IMR-90 (cell line): ENCODE measurements at regions of chr4 and their contacts with region 1.

Region 1: GRCh38 chr4:8176547-8177399 is 18.2 kb upstream of the ABLIM2 start:
- DNase-seq: peak; percentile 52
- ATAC-seq: peak; percentile 99
- H3K4me3 ChIP-seq: no peak overlapping the region
- H3K27ac ChIP-seq: no peak overlapping the region
- H3K4me1 ChIP-seq: no peaks in the 10 kb centered on the region
- H3K27me3 ChIP-seq: peaks cover 38% of the 10 kb centered on the region
- CTCF ChIP-seq: peak; percentile 93
- POLR2A ChIP-seq: no peak
- RAD21 ChIP-seq: peak; percentile 94

Region 2: GRCh38 chr4:8192748-8193738 is 16.3 kb after region 1 on chr4:
- CTCF ChIA-PET with region 1: interaction called, 11 read pairs
- POLR2A ChIA-PET with region 1: no interaction called
- dilution Hi-C with region 1: no loop called
- in situ Hi-C with region 1: no loop called
- intact Hi-C with region 1: no loop called
- DNase-seq: peak; percentile 28
- ATAC-seq: peak; percentile 56
- H3K4me3 ChIP-seq: no peak overlapping the region
- H3K27ac ChIP-seq: no peak overlapping the region
- H3K4me1 ChIP-seq: peaks cover 4% of the 10 kb centered on the region; the same call in 1 of the 2 replicates
- H3K27me3 ChIP-seq: peaks cover 21% of the 10 kb centered on the region; the same call in 1 of the 2 replicates
- CTCF ChIP-seq: peak; percentile 28; the same call in 1 of the 2 replicates
- POLR2A ChIP-seq: no peak
- RAD21 ChIP-seq: no peak

Region 3: GRCh38 chr4:8215001-8215427 is 38.2 kb after region 1 on chr4:
- CTCF ChIA-PET with region 1: no interaction called
- POLR2A ChIA-PET with region 1: no interaction called
- dilution Hi-C with region 1: no loop called
- in situ Hi-C with region 1: no loop called
- intact Hi-C with region 1: loop called (anchors 5 kb)
- DNase-seq: peak; percentile 84
- ATAC-seq: peak; percentile 86
- H3K4me3 ChIP-seq: no peak overlapping the region
- H3K27ac ChIP-seq: no peak overlapping the region
- H3K4me1 ChIP-seq: peaks cover 3% of the 10 kb centered on the region; the same call in 1 of the 2 replicates
- H3K27me3 ChIP-seq: peaks cover 10% of the 10 kb centered on the region; the same call in 1 of the 2 replicates
- CTCF ChIP-seq: no peak
- POLR2A ChIP-seq: no peak
- RAD21 ChIP-seq: no peak